ENCODE measurements at regions of chr20 and their contacts with region 1.

Region 1: DNA sequence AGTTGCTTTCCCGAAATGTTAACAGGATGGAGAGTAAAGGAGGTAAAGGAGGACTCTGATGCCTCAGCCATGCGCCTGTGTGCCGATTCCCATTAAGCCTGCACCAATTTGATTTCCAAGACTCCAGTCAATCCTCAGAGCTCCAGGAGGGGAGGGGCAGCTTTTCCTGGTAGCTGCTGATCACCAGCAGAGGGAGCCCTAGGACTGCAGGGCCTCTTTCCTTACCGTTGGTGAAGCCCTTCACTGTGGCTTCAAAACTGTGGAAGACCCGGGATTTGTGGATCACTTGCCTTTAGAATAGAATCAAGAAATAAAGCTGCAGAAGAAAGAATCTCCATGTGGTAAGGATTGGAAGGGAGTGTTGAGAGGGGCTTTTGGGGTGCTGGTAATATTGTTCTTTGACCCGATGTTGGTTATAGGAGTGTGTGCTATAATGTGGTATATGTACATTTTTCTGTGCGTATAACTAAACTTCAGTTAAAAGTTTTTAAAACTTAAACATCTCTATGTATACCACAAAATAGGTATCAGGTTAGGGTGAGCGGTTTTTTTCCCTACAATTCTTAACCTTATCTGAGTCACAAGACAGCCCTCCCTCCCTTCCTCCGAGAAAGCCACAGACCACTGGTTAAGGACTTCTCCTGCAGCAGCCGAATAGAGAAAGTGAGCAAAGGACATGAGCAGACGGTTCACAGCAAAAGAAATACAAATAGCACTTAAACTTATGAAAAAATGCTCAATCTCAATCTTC is 6.9 kb upstream of the OSER1 start:
- DNase-seq: peak; percentile 59 to 79 (median 70)
- H3K4me3 ChIP-seq: peak overlapping the region; percentile 48
- H3K4me3 Mint-ChIP-seq: peak overlapping the region; percentile 81 to 93 (median 84)
- H3K27ac ChIP-seq: peak overlapping the region; percentile 36
- H3K27ac Mint-ChIP-seq: peak overlapping the region; percentile 83 to 95 (median 89)
- H3K4me1 ChIP-seq: peaks cover 47% of the 10 kb centered on the region
- H3K4me1 Mint-ChIP-seq: peaks cover 53 to 65% (median 63%) of the 10 kb centered on the region in 3 donors
- H3K27me3 ChIP-seq: no peaks in the 10 kb centered on the region
- H3K27me3 Mint-ChIP-seq: no peaks in the 10 kb centered on the region

Region 2: DNA sequence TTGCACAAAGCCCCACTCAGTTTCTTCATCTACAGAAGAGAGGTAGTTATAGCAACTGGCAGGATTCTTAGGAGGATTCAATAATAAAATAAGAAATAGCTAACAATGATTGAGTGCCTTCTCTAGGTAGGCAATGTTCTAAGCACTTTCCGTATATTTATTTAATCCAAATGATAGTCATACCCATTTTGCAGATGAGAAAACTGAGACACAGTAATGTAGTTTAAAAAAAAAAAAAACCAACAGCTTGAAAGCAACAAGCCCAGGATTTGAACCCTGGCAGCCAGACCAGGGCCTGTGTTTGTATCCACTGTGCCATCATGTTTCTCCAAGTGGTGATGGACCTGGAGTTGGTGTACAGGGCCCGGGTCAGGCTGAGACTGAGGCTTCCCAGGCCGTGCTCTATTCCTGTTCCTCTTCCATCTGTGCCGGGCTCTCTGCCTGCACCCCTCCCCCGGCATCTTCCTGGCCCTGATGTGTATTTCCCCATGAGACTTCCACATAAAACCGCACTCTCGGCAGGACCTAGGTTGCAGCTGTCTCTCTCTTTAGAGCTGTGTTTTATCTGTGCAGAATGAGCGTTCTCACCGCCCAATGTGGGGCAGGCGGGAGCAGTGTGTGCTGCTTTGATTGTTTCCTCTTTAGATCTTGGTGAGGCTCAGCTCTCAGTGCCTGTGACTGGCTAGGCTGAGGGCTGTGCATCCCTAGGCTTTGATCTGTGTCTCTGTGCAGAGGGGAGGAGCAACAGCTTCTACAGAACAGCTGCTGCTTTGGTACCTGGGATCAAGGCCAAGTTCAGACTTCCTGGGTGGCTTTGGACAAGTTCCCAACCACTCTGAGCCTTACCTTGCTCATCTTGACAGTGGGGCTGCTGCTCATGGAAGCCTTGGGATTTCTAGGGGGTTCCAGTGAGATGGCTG is 253.4 kb before region 1 on chr20:
- CTCF ChIA-PET with region 1: no interaction called
- POLR2A ChIA-PET with region 1: no interaction called
- DNase-seq: peak in 2 of 5 donors; percentile 40 to 66
- H3K4me3 ChIP-seq: no peak overlapping the region
- H3K4me3 Mint-ChIP-seq: peak overlapping the region in 6 of 7 donors; percentile 11 to 74 (median 44)
- H3K27ac ChIP-seq: no peak overlapping the region
- H3K27ac Mint-ChIP-seq: peak overlapping the region in 4 of 8 donors; percentile 1 to 63 (median 34)
- H3K4me1 ChIP-seq: peaks cover 62% of the 10 kb centered on the region
- H3K4me1 Mint-ChIP-seq: peaks cover 27 to 48% (median 37%) of the 10 kb centered on the region in 3 donors
- H3K27me3 ChIP-seq: no peaks in the 10 kb centered on the region
- H3K27me3 Mint-ChIP-seq: peaks cover 4 to 6% of the 10 kb centered on the region in 2 donors

Region 3: DNA sequence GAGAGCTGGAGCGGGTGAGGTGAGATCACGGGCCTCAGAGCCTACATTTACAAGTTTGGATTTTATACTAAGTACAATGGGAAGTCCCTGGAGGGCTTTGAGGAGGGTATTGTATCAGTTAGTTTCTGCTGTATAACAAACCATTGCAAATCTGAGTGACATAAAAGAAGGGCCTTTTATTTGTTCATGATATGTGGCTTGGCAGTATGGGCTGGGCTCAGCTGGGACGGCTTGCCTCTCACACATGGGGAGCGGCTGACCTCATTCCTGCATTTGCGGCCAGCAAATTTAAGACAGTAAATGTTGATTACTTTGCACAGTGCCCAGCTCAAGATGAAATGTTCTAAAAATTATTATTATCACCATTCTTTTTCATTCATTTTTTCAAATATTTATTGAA is 51.3 kb after region 1 on chr20:
- CTCF ChIA-PET with region 1: interaction called, 10 read pairs
- POLR2A ChIA-PET with region 1: no interaction called
- DNase-seq: no peak
- H3K4me3 ChIP-seq: no peak overlapping the region
- H3K4me3 Mint-ChIP-seq: no peak overlapping the region
- H3K27ac ChIP-seq: no peak overlapping the region
- H3K27ac Mint-ChIP-seq: no peak overlapping the region
- H3K4me1 ChIP-seq: no peaks in the 10 kb centered on the region
- H3K4me1 Mint-ChIP-seq: no peaks in the 10 kb centered on the region
- H3K27me3 ChIP-seq: no peaks in the 10 kb centered on the region
- H3K27me3 Mint-ChIP-seq: peaks cover 0 to 1% of the 10 kb centered on the region in 2 donors

Region 4: DNA sequence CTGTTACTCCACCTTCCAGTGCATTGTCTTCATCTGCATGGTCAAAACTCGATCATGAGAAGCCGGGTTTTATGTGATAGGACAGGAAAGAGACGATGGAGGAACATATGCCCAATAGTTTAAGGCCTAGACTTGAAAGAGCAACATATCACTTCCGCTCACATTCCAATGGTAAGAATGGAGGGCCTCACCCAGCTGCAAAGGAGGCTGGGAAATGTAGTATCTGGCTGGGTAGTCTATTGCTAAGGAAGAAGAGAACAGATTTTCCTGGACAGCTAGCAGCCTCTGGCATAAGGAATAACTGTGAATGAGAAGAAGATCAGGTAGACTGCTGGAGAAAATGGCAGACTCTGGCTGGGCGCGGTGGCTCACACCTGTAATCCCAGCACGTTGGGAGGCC is 74.2 kb after region 1 on chr20:
- CTCF ChIA-PET with region 1: interaction called, 13 read pairs
- POLR2A ChIA-PET with region 1: no interaction called
- DNase-seq: no peak
- H3K4me3 ChIP-seq: no peak overlapping the region
- H3K4me3 Mint-ChIP-seq: no peak overlapping the region
- H3K27ac ChIP-seq: no peak overlapping the region
- H3K27ac Mint-ChIP-seq: peak overlapping the region in 1 of 8 donors; percentile 84
- H3K4me1 ChIP-seq: no peaks in the 10 kb centered on the region
- H3K4me1 Mint-ChIP-seq: peaks cover 0 to 9% (median 0%) of the 10 kb centered on the region in 3 donors
- H3K27me3 ChIP-seq: no peaks in the 10 kb centered on the region
- H3K27me3 Mint-ChIP-seq: no peaks in the 10 kb centered on the region

Region 5: GRCh38 chr20:44310664-44311639 is 93.4 kb after region 1 on chr20 and contains the start of gene FITM2:
- CTCF ChIA-PET with region 1: interaction called, 396 read pairs
- POLR2A ChIA-PET with region 1: interaction called, 11 read pairs
- DNase-seq: peak; percentile 97 to 99 (median 98)
- H3K4me3 ChIP-seq: peak within 1 kb of the TSS; percentile 89
- H3K4me3 Mint-ChIP-seq: peak within 1 kb of the TSS; percentile 91 to 97 (median 95)
- H3K27ac ChIP-seq: peak within 1 kb of the TSS; percentile 61
- H3K27ac Mint-ChIP-seq: peak within 1 kb of the TSS; percentile 83 to 94 (median 90)
- H3K4me1 ChIP-seq: peaks cover 14% of the 10 kb centered on the region
- H3K4me1 Mint-ChIP-seq: peaks cover 26 to 33% (median 26%) of the 10 kb centered on the region in 3 donors
- H3K27me3 ChIP-seq: no peaks in the 10 kb centered on the region
- H3K27me3 Mint-ChIP-seq: peaks cover 0 to 4% of the 10 kb centered on the region in 2 donors
- total RNA-seq, gene FITM2: 2.4 to 2.5 TPM

Region 6: DNA sequence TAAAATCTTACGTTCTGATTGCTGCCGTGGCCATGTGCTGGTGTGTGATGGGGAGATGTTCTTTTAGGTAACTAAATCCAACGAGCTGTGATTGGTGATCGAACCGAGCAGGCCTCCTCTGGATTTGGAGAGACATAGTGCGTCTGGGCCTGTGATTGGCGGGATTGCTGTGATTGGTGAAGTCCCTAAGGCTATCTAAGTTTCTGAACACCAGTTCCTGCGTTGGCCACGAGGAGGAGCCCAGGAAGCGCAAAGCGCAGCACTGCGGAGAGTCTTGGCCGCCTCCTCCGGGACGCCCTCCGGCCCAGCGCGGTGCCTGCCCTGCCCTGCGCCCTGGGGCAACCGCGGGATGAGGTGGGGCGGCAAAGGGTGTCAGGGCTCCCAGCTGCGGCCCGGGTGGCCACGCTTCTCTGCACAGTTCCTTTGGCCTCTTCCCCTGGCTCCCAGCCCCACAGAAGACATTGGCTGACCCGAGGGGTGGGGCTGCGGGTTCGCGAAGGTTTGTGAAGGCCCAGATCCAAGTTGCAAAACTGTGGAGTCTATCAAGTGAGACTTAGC is 171.0 kb after region 1 on chr20:
- CTCF ChIA-PET with region 1: interaction called, 34 read pairs
- POLR2A ChIA-PET with region 1: no interaction called
- DNase-seq: peak; percentile 37 to 64 (median 39)
- H3K4me3 ChIP-seq: no peak overlapping the region
- H3K4me3 Mint-ChIP-seq: no peak overlapping the region
- H3K27ac ChIP-seq: no peak overlapping the region
- H3K27ac Mint-ChIP-seq: peak overlapping the region in 2 of 8 donors; percentile 42 to 68
- H3K4me1 ChIP-seq: peaks cover 7% of the 10 kb centered on the region
- H3K4me1 Mint-ChIP-seq: peaks cover 3 to 8% (median 7%) of the 10 kb centered on the region in 3 donors
- H3K27me3 ChIP-seq: no peaks in the 10 kb centered on the region
- H3K27me3 Mint-ChIP-seq: peaks cover 12 to 41% of the 10 kb centered on the region in 2 donors

Region 7: DNA sequence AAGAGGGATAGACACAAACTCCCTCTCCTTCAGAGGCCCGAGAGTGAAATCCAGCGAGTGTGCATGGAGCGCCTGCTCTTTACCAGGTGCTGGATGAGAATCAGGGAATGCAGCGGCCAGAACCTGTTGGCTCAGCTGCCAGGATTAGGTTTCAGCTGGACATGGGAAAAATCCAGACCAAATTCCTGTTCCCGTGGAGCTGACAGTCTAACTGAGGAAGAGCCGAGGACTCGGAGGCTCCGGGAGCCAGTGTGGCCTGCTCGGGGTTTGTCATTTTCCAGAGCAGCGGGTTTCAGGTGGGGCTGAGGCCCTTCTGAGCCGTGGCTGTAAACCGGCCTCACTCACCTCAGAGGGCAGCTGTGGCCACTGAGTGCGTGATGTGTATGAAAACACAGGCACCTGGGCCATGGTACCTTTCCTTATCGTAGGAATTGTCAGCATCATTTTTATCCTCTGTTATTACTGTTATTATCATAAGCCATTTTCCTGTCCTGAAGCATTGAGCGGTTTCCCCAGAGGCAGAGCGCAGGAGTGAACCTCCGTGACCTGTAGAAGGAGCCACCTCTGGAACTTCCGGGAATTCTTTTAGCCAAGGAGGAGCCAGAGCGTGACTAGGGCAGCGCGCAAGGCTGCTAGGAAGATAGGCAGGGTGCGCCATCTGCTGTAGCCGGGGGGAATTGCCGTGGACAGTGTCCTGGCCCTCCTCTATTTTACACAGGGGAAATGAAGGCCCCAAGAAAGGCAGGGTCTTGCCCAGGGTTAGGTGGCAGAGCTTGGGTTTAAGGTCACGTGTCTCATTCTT is 392.2 kb after region 1 on chr20:
- CTCF ChIA-PET with region 1: interaction called, 55 read pairs
- POLR2A ChIA-PET with region 1: interaction called, 5 read pairs
- DNase-seq: peak; percentile 74 to 87 (median 78)
- H3K4me3 ChIP-seq: no peak overlapping the region
- H3K4me3 Mint-ChIP-seq: peak overlapping the region; percentile 64 to 88 (median 72)
- H3K27ac ChIP-seq: peak overlapping the region; percentile 28
- H3K27ac Mint-ChIP-seq: peak overlapping the region; percentile 93 to 100 (median 98)
- H3K4me1 ChIP-seq: peaks cover 30% of the 10 kb centered on the region
- H3K4me1 Mint-ChIP-seq: peaks cover 32 to 37% (median 34%) of the 10 kb centered on the region in 3 donors
- H3K27me3 ChIP-seq: no peaks in the 10 kb centered on the region
- H3K27me3 Mint-ChIP-seq: peaks cover 0 to 4% of the 10 kb centered on the region in 2 donors

Measured in CD8-positive, alpha-beta memory T cell (primary cell).